Activated naive CD4-positive, alpha-beta T cell treated with anti-CD3 and anti-CD28 coated beads, Interleukin-2, amount 10 ng/mL, durations not matched to agents 7 days and 5 days (primary cell): ENCODE measurements at regions of chr11 and their contacts with region 1.

Region 1: GRCh38 chr11:3854977-3855807 is at the start of gene STIM1:
- DNase-seq: peak; percentile 97
- H3K4me3 Mint-ChIP-seq: peak within 1 kb of the TSS; percentile 98
- H3K27ac Mint-ChIP-seq: peak within 1 kb of the TSS; percentile 98
- H3K4me1 Mint-ChIP-seq: peaks cover 60% of the 10 kb centered on the region
- H3K27me3 Mint-ChIP-seq: peaks cover 6% of the 10 kb centered on the region

Region 2: GRCh38 chr11:3747684-3748083 is 107.5 kb before region 1 on chr11:
- CTCF ChIA-PET with region 1: no interaction called
- DNase-seq: no peak
- H3K4me3 Mint-ChIP-seq: no peak overlapping the region
- H3K27ac Mint-ChIP-seq: no peak overlapping the region
- H3K4me1 Mint-ChIP-seq: no peaks in the 10 kb centered on the region
- H3K27me3 Mint-ChIP-seq: no peaks in the 10 kb centered on the region

Region 3: GRCh38 chr11:3867209-3868091 is 12.3 kb after region 1 on chr11:
- CTCF ChIA-PET with region 1: interaction called, 42 read pairs
- DNase-seq: peak; percentile 27
- H3K4me3 Mint-ChIP-seq: no peak overlapping the region
- H3K27ac Mint-ChIP-seq: peak overlapping the region; percentile 46
- H3K4me1 Mint-ChIP-seq: peaks cover 85% of the 10 kb centered on the region
- H3K27me3 Mint-ChIP-seq: no peaks in the 10 kb centered on the region

Region 4: GRCh38 chr11:3905080-3905953 is 50.1 kb after region 1 on chr11:
- CTCF ChIA-PET with region 1: interaction called, 13 read pairs
- DNase-seq: peak; percentile 82
- H3K4me3 Mint-ChIP-seq: no peak overlapping the region
- H3K27ac Mint-ChIP-seq: peak overlapping the region; percentile 65
- H3K4me1 Mint-ChIP-seq: peaks cover 77% of the 10 kb centered on the region
- H3K27me3 Mint-ChIP-seq: no peaks in the 10 kb centered on the region

Region 5: GRCh38 chr11:3947061-3947460 is 91.9 kb after region 1 on chr11:
- CTCF ChIA-PET with region 1: interaction called, 26 read pairs
- DNase-seq: peak; percentile 72
- H3K4me3 Mint-ChIP-seq: peak overlapping the region; percentile 72
- H3K27ac Mint-ChIP-seq: peak overlapping the region; percentile 98
- H3K4me1 Mint-ChIP-seq: peaks cover 95% of the 10 kb centered on the region
- H3K27me3 Mint-ChIP-seq: no peaks in the 10 kb centered on the region

Region 6: DNA sequence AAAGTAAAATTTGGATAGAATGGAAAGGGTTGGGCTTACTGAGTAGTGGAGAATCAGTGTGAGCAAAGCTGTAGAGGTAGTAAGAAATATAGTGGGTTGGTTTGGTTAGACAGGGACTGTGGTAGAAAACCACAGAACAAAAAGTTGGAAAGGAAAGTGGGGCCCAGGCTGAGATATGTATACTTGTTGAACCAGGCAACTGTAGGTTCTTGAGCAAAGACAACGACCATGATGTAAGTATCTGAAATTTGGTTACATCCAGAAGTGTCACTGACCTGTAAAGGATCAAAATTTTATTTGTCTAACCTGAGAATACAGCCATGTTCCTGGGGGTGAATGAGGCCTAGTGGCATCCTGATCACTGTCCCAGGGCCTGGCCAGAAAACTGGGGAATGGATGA is 114.4 kb after region 1 on chr11:
- CTCF ChIA-PET with region 1: interaction called, 22 read pairs
- DNase-seq: peak; percentile 43
- H3K4me3 Mint-ChIP-seq: no peak overlapping the region
- H3K27ac Mint-ChIP-seq: peak overlapping the region; percentile 78
- H3K4me1 Mint-ChIP-seq: peaks cover 59% of the 10 kb centered on the region
- H3K27me3 Mint-ChIP-seq: no peaks in the 10 kb centered on the region